AG04449 (cell line): ENCODE measurements at regions of chr12 and their contacts with region 1.

Region 1: DNA sequence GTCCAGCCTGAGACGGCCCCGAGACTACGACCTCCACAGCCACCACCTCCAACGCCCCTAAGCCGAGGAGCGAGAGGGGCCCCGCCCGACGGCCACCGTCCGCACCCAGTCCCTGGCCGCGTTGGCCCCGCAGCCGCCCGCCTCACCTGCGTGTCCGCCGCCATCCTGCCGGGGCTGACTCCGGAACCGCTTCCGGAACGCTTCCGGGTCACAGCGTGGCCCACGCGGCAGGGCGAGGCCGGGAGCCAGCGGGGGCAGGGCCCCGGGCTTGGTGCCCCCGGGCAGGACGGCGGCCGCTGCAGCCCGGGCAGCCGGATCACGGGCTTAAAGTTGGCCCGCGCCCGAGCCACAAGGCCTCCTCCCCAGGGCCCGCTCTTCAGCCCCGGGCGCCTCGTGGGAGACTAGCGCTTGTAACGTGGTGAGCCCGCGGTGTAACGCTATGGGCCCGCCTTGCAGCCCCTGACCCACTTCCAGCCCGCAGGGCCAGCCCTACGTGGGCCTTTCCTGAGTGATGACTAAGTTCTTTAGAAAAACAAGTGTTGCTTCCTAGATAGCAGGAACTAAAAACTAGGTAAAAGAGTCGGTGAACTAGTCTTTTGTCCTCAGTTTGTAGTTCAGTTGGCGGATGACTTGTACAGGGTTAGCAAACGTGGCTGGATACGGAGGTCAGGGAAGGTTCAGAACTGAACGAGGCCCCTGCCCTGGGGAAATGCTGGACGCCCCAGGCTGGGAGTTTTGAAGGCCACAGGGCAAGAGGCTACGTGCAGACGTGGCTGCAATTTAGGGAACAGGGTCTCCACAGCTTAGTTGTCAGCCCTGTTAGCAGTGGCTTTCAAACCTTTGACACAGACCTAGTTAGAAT is at the start of gene GCN1:
- DNase-seq: no peak
- H3K4me3 ChIP-seq: peak within 1 kb of the TSS; percentile 84
- CTCF ChIP-seq: no peak

Region 2: DNA sequence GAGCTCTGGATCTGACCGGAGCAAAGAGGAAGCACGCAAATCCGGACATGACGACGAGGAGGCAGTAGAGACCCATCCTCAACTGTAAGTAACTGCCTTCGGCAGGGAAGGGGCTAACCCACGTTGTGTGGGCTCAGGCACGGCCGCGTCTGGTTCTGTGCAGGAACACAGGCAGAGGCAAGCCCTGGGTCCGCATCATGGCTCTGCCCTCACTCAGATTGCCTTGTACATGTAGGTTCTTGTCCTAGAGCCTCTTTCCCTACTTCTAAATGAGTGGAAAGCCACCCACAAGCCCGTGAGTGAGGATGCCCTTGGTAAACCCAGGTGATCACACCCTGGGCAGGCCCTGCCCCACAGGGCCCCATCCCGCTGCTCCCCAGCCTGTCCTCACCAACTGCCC is 15.1 kb after region 1 on chr12:
- CTCF ChIA-PET with region 1: interaction called, 43 read pairs
- POLR2A ChIA-PET with region 1: interaction called, 34 read pairs
- DNase-seq: no peak
- H3K4me3 ChIP-seq: no peak overlapping the region
- CTCF ChIP-seq: no peak

Region 3: DNA sequence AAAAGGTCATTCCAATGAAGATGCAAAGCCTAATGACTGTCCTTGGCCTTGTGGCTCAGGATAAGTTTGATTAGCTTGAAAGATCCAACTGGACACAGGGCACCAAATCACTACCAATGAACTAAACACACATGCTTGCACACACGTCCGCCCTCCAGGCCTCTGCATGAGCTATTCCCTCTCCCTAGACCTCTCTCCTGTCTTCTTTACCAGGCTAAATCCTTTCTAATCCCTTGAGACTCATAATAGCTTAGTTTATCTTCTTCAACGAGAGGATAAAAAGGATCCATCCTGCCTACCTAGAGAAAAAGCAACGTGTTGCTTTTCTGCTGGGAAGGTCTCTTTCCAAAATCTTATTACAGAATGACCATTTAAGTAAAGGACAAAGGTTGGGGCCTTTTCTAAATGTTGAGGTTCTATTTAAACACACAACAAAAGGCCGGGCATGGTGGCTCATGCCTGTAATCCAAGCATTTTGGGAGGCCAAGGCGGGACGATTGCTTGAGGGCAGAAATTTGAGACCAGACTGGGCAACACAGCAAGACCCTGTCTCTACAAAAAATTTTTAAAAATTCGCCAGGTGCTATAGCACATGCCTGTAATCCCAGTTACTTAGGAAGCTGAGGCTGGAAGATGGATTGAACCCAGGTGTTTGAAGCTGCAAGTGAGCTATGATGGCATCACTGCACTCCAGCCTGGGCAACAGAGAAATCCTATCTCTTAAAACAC is 48.4 kb after region 1 on chr12:
- CTCF ChIA-PET with region 1: no interaction called
- POLR2A ChIA-PET with region 1: interaction called, 18 read pairs
- DNase-seq: no peak
- H3K4me3 ChIP-seq: no peak overlapping the region
- CTCF ChIP-seq: no peak

Region 4: DNA sequence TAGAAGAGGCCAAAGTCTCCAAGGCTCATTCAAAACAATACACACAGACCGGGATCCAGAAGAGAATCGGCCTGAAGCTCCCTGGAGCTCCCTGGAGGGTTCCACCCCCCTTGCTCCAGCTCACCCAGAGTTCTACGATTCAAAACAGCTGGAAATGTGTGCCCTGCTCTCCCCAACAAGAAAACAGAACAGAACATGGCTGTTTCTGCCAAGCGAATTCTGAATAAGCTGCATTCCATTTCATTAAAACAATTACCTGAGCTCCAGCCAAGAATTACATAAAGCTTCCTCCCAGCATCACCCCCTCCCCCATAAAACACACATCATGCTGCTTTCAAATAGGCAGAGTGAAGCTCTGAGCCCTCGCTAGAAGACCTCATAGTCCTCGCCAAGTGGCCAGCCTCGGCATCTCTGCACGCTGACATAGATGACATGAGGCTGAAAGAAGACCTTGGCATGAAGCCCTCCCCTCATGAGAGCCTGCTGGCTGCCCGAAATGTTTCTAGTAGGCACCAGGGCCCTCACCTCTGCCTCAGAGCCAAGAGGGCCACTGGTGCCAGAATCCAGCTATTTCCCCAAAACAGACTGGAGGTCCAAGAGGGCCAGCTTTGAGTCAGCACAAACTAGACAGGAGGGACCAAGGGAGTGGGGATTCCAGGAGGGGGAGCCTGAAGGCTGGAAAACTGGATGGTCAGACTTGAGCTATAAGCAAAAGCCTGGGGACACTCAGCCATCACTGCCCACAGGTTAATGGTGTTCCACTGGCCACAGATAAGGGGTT is 62.5 kb after region 1 on chr12:
- CTCF ChIA-PET with region 1: interaction called, 125 read pairs
- POLR2A ChIA-PET with region 1: interaction called, 134 read pairs
- DNase-seq: peak; percentile 65
- H3K4me3 ChIP-seq: peak overlapping the region; percentile 29
- CTCF ChIP-seq: peak; percentile 13

Region 5: GRCh38 chr12:120292661-120293531 is 98.1 kb after region 1 on chr12 and contains the start of gene RNU4-1:
- CTCF ChIA-PET with region 1: interaction called, 4 read pairs
- POLR2A ChIA-PET with region 1: interaction called, 139 read pairs
- DNase-seq: peak; percentile 79
- H3K4me3 ChIP-seq: peak within 1 kb of the TSS; percentile 61
- CTCF ChIP-seq: no peak

Region 6: GRCh38 chr12:120350576-120351350 is 156.0 kb after region 1 on chr12:
- CTCF ChIA-PET with region 1: no interaction called
- POLR2A ChIA-PET with region 1: no interaction called
- DNase-seq: no peak
- H3K4me3 ChIP-seq: no peak overlapping the region
- CTCF ChIP-seq: no peak